ENCODE measurements at regions of chr14 and their contacts with region 1.

Region 1: GRCh38 chr14:103576371-103577024 is 13.7 kb downstream of the COA8 start:
- DNase-seq: peak; percentile 85 to 92 (median 90)
- H3K4me3 ChIP-seq: no peak overlapping the region
- H3K27ac ChIP-seq: peak overlapping the region in 1 of 2 donors; percentile 60
- H3K4me1 ChIP-seq: peaks cover 6% of the 10 kb centered on the region
- H3K27me3 ChIP-seq: no peaks in the 10 kb centered on the region
- CTCF ChIP-seq: no peak
- EP300 ChIP-seq: no peak
- POLR2A ChIP-seq: no peak

Region 2: GRCh38 chr14:103562429-103563225 is 13.9 kb before region 1 on chr14 and contains the starts of genes BAG5 and COA8:
- intact Hi-C with region 1: no loop called
- DNase-seq: peak; percentile 78 to 90 (median 85)
- H3K4me3 ChIP-seq: peak within 1 kb of the TSS; percentile 93
- H3K27ac ChIP-seq: peak within 1 kb of the TSS; percentile 94 to 98
- H3K4me1 ChIP-seq: peaks cover 8% of the 10 kb centered on the region
- H3K27me3 ChIP-seq: no peaks in the 10 kb centered on the region
- CTCF ChIP-seq: peak in 1 of 3 donors; percentile 22
- EP300 ChIP-seq: no peak
- POLR2A ChIP-seq: peak; percentile 57
- total RNA-seq, gene BAG5: 13.2 to 29.1 (median 24.4) TPM
- total RNA-seq, gene COA8: 11.4 to 28.1 (median 26.6) TPM

Region 3: GRCh38 chr14:103730490-103731035 is 154.1 kb after region 1 on chr14:
- intact Hi-C with region 1: loop called in 1 of 4 experiments (anchors 10 kb)
- DNase-seq: peak in 3 of 5 donors; percentile 24 to 48 (median 32)
- H3K4me3 ChIP-seq: no peak overlapping the region
- H3K27ac ChIP-seq: peak overlapping the region in 1 of 2 donors; percentile 21
- H3K4me1 ChIP-seq: peaks cover 13% of the 10 kb centered on the region
- H3K27me3 ChIP-seq: no peaks in the 10 kb centered on the region
- CTCF ChIP-seq: no peak
- EP300 ChIP-seq: no peak
- POLR2A ChIP-seq: no peak

Region 4: GRCh38 chr14:103910262-103910935 is 333.9 kb after region 1 on chr14:
- intact Hi-C with region 1: loop called in 1 of 4 experiments (anchors 10 kb)
- DNase-seq: peak; percentile 75 to 82 (median 81)
- H3K4me3 ChIP-seq: no peak overlapping the region
- H3K27ac ChIP-seq: no peak overlapping the region
- H3K4me1 ChIP-seq: no peaks in the 10 kb centered on the region
- H3K27me3 ChIP-seq: no peaks in the 10 kb centered on the region
- CTCF ChIP-seq: peak; percentile 63 to 85 (median 74)
- EP300 ChIP-seq: no peak
- POLR2A ChIP-seq: no peak

Measured in ovary (tissue), 10 donors.